ENCODE measurements at regions of chr2 and their contacts with region 1.

Region 1: DNA sequence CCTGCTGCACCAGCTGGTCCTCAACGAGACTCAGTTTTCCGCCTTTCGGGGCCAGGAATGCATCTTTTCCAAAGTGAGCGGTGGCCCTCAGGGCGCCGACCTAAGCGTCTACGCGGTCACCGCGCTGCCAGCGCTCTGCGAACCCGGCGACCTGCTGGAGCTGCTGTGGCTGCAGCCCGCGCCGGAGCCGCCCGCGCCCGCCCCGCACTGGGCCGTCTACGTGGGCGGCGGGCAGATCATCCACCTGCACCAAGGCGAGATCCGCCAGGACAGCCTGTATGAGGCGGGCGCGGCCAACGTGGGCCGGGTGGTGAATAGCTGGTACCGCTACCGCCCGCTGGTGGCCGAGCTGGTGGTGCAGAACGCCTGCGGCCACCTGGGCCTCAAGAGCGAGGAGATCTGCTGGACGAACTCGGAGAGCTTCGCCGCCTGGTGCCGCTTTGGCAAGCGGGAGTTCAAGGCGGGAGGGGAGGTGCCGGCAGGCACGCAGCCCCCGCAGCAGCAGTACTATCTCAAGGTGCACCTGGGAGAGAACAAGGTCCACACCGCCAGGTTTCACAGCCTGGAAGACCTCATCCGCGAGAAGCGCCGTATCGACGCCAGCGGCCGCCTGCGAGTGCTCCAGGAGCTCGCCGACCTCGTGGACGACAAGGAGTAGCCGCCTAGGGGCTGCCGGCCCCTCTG is 1.8 kb downstream of the LRATD1 start:
- DNase-seq: peak; percentile 86
- ATAC-seq: peak; percentile 38
- H3K4me3 Mint-ChIP-seq: peak overlapping the region; percentile 79
- H3K27ac Mint-ChIP-seq: no peak overlapping the region
- H3K4me1 Mint-ChIP-seq: peaks cover 28% of the 10 kb centered on the region
- H3K27me3 Mint-ChIP-seq: peaks cover 81% of the 10 kb centered on the region
- CTCF ChIP-seq: no peak

Region 2: GRCh38 chr2:14903709-14904374 is 269.5 kb after region 1 on chr2:
- CTCF ChIA-PET with region 1: interaction called, 12 read pairs
- POLR2A ChIA-PET with region 1: no interaction called
- DNase-seq: peak; percentile 93
- ATAC-seq: peak; percentile 100
- H3K4me3 Mint-ChIP-seq: no peak overlapping the region
- H3K27ac Mint-ChIP-seq: no peak overlapping the region
- H3K4me1 Mint-ChIP-seq: peaks cover 19% of the 10 kb centered on the region
- H3K27me3 Mint-ChIP-seq: no peaks in the 10 kb centered on the region
- CTCF ChIP-seq: peak; percentile 98

Measured in WTC11 (cell line).